ENCODE measurements at regions of chr3 and their contacts with region 1.

Region 1: DNA sequence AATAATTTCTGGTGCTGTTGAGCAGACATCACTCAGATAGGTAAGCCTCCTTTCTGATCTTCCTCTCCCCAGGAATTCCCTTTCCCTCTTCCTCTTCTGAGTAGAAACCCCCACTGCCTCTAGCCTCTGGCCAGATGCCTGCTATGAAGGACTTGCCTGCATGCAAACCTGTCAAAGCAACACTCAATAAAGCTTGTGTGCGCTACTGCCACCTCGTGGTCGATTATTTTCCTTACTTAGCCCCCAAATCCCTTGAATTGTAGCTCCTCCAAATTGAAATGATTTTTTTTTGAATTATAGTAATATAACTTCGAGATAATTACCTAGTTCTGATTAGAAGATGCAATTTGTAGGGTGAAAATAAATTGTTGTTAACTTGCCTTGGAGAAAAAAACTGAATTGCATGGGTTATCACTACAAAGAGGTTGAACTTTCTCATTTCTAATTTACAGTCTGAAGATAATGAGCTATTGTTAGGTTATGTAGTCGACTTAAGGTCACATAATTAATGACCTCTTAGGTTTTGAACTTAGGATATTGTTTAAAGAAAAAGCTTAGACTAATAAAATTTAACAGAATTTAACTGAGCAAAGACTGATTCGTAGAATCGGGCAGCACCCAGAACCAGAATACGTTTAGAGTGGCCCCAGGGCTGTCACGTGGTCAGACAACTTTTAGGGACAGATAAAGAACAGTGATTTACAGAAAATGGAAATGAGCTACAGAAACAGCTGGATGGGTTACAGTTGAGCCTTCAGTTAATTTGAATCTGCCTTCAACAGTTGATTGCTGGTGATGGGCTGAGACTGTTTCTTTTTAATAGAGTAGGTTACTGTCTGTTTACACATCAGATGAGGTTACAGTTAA is 269.3 kb downstream of the ARPP21 start:
- DNase-seq: peak; percentile 64
- ATAC-seq: peak; percentile 46 to 70

Region 2: GRCh38 chr3:35677797-35678196 is 230.8 kb before region 1 on chr3:
- intact Hi-C with region 1: loop called in 1 of 2 experiments (anchors 10 kb)
- DNase-seq: no peak
- ATAC-seq: no peak